AG04450 (cell line): ENCODE measurements at regions of chr18 and their contacts with region 1.

Region 1: GRCh38 chr18:8696749-8697211 is 8.6 kb upstream of the MTCL1 start:
- DNase-seq: no peak
- H3K4me3 ChIP-seq: no peak overlapping the region
- H3K27ac ChIP-seq: no peak overlapping the region
- H3K27me3 ChIP-seq: no peaks in the 10 kb centered on the region
- CTCF ChIP-seq: peak; percentile 95

Region 2: DNA sequence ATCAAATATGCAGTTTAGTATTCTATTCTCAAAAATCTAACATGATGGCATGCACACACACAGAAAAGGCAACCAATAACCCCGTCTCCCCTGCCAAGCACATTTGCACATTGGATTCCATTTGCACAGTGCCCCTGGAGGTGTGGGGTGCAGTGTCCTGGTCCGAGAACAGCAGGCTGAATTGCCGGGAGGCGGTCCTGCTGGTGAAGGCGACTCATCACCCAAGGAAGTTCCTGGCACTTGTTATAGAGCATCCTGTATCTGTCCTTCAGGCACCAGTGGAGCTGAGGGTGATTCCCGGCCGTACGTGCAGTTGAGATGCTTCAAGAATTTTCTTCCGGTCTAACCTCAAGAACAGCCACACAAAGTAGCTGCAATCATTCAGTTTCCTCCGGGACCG is 160.6 kb before region 1 on chr18:
- CTCF ChIA-PET with region 1: no interaction called
- POLR2A ChIA-PET with region 1: no interaction called
- DNase-seq: no peak
- H3K4me3 ChIP-seq: no peak overlapping the region
- H3K27ac ChIP-seq: no peak overlapping the region
- H3K27me3 ChIP-seq: peaks cover 2% of the 10 kb centered on the region
- CTCF ChIP-seq: no peak

Region 3: GRCh38 chr18:8559612-8560186 is 137.1 kb before region 1 on chr18:
- CTCF ChIA-PET with region 1: no interaction called
- POLR2A ChIA-PET with region 1: no interaction called
- DNase-seq: no peak
- H3K4me3 ChIP-seq: no peak overlapping the region
- H3K27ac ChIP-seq: no peak overlapping the region
- H3K27me3 ChIP-seq: peaks cover 5% of the 10 kb centered on the region
- CTCF ChIP-seq: no peak

Region 4: GRCh38 chr18:8661754-8662569 is 34.8 kb before region 1 on chr18:
- CTCF ChIA-PET with region 1: interaction called, 22 read pairs
- POLR2A ChIA-PET with region 1: interaction called, 4 read pairs
- DNase-seq: no peak
- H3K4me3 ChIP-seq: no peak overlapping the region
- H3K27ac ChIP-seq: no peak overlapping the region
- H3K27me3 ChIP-seq: no peaks in the 10 kb centered on the region
- CTCF ChIP-seq: no peak

Region 5: DNA sequence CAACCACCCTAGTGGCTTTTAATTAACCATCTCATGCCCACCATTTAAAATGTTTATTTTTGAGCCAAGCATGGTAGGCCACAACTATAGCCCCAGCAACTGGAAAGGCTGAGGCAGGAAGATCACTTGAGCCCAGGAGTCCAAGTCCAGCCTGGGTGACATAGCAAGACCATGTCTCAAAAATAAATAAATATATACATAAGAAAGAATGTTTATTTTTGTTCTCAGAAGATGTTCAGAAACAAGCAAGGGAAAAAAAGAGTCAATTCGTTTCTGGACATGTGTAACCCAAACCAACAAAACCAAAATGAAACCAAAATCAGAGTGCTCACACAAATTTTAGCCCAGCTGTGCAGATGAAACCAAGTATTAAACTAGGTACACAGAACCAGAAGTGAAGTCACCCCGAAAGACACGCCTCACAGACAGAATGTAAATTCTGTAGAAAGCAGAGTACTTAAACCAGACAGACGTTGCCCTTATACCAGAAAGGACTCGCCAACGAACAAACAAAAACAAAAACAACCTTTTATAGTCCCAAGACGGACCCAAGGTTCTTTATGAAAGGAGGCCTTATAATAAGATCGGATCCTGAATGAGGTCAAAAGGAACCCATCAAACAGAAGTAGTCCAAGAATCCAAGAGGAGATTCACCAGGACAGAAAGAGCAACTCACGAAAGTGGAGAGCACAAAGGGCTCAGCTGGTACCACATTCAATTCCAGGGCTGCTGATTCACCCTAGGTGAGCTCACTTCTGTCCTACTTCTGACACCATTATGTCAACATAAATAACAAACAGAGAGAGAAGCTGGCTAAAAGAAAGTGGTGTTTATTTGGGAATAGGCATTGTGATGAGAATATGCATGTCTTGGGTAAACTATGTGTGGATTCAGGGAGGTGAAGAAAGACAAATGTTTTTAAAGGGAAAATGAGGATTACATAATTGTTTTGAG is 23.2 kb before region 1 on chr18:
- CTCF ChIA-PET with region 1: interaction called, 25 read pairs
- POLR2A ChIA-PET with region 1: no interaction called
- DNase-seq: no peak
- H3K4me3 ChIP-seq: no peak overlapping the region
- H3K27ac ChIP-seq: no peak overlapping the region
- H3K27me3 ChIP-seq: no peaks in the 10 kb centered on the region
- CTCF ChIP-seq: no peak

Region 6: DNA sequence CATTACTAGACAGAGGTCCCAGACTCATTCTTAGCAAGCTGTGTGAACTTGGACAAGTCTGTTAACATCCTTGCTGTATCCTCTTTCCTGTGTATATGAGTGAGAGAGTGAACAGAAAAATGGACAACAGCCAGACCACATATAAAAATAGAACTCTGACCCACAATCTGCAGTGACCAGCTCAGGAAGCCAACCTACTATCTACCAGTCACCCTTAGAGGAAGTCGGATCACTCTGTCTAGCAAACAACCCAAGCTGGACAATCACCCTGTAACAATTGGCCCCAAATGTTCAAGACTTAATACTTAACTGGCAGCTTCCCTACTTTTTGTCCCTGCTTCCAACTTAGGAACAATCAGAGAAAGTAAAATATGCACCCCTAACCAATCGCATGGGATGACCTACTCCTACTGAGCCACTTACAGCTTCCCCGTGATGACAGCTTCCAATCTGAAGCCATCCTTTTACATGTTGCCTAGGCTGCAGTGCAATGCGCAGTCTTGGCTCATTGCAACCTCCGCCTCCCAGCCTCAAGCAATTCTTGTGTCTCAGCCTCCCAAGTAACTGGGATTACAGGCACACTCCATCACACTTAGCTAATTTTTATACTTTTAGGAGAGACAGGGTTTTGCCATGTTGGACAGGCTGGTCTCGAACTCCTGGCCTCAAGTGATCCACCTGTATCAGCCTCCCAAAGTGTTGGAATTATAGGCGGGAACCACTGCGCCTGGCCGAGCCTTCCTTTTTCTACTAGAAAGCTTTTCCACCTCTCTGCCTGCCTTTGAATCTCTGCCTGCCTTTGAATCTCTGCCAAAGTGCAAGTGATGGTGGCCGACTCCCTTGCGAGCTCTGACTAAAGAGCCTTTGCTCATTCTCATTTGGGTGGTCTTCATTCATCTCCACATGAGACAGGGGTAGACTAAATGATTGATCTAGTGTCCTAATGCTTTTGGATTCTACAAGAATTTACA is 247.4 kb after region 1 on chr18:
- CTCF ChIA-PET with region 1: no interaction called
- POLR2A ChIA-PET with region 1: no interaction called
- DNase-seq: peak; percentile 63
- H3K4me3 ChIP-seq: no peak overlapping the region
- H3K27ac ChIP-seq: no peak overlapping the region
- H3K27me3 ChIP-seq: no peaks in the 10 kb centered on the region
- CTCF ChIP-seq: no peak

Region 7: DNA sequence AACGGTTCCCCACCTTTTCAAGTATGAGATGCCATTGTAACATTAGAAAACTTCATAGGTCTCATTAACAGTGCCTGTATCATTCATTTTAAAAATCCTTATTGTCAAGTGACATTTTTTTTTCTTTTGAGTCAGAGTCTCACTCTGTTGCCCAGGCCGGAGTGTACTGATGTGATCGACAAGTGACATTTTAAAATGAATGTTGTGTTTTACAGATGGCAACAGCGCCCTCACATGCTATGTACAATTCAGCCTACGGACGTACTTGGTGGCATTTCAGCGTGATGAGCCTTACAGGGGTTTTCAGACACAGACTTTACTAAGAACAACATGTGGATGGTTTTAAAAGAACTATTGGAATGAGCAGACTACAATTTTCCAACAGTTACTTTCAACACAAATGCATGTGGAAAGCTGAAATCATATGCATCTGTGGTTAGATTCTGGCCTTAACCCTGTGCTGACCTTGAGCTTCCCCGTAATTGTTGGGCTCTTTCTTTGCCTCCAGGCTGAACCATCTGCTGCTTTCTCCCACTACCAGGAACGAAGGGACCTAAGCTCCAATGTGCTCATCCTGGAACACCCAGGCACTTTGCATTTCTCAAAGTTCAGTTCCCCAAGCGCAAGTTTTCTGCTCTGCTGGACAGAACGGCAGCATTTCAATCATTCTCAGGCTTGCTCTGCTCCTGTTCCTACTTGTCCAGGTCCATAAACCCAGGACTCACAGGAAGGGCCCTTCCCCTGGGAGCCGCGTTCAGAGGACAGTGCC is 285.8 kb after region 1 on chr18:
- CTCF ChIA-PET with region 1: interaction called, 50 read pairs
- POLR2A ChIA-PET with region 1: no interaction called
- DNase-seq: peak; percentile 58
- H3K4me3 ChIP-seq: no peak overlapping the region
- H3K27ac ChIP-seq: peak overlapping the region; percentile 78
- H3K27me3 ChIP-seq: no peaks in the 10 kb centered on the region
- CTCF ChIP-seq: peak; percentile 33

Region 8: GRCh38 chr18:9055185-9055584 is 358.4 kb after region 1 on chr18:
- CTCF ChIA-PET with region 1: interaction called, 14 read pairs
- POLR2A ChIA-PET with region 1: no interaction called
- DNase-seq: peak; percentile 27
- H3K4me3 ChIP-seq: no peak overlapping the region
- H3K27ac ChIP-seq: no peak overlapping the region
- H3K27me3 ChIP-seq: no peaks in the 10 kb centered on the region
- CTCF ChIP-seq: peak; percentile 31; the same call in 1 of the 2 replicates